ENCODE measurements at regions of chr4 and their contacts with region 1.

Region 1: DNA sequence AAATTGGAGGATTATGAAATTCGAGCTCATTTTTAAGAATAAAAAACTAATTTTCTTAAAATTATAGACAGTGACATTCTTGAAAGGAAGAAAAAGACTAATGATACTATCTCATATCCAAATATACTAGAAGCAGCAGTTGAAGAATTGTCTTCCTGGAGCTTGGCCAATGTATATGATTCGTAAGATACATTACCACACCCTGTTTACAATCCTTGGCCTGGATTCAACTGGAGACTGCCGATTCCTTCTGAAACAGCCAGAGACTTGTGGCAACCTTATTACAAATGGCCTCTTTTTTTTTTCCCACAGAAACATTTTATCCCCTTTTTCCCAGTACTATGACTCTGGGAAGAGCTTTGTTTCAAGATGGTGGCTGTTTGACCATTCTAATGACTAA is 571.2 kb upstream of the FAT1 start:
- DNase-seq: no peak
- H3K4me3 ChIP-seq: no peak overlapping the region
- H3K27ac ChIP-seq: no peak overlapping the region
- H3K4me1 ChIP-seq: no peaks in the 10 kb centered on the region
- H3K27me3 ChIP-seq: no peaks in the 10 kb centered on the region
- CTCF ChIP-seq: no peak
- POLR2A ChIP-seq: no peak

Region 2: DNA sequence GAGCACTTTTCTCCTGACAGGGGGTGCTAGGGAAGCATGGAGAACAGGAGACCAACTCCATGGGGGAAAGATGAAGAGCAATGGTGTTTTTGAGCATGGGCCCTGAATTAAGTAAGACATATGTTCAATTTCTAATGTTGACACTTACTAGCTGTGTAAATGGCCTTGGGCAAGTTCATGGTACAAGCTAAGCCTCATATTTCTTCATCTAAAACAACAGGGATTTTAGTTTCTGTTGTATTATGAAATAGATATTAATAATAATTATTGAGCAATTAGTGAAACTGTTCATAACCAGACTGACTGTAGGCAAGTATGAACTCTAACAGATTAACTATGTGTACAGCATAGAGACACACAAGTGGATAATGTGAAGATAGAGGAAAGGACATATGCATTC is 56.2 kb before region 1 on chr4:
- intact Hi-C with region 1: loop called (anchors 2 kb)
- DNase-seq: no peak
- H3K4me3 ChIP-seq: no peak overlapping the region
- H3K27ac ChIP-seq: no peak overlapping the region
- H3K4me1 ChIP-seq: no peaks in the 10 kb centered on the region
- H3K27me3 ChIP-seq: no peaks in the 10 kb centered on the region
- CTCF ChIP-seq: no peak
- POLR2A ChIP-seq: no peak

Region 3: DNA sequence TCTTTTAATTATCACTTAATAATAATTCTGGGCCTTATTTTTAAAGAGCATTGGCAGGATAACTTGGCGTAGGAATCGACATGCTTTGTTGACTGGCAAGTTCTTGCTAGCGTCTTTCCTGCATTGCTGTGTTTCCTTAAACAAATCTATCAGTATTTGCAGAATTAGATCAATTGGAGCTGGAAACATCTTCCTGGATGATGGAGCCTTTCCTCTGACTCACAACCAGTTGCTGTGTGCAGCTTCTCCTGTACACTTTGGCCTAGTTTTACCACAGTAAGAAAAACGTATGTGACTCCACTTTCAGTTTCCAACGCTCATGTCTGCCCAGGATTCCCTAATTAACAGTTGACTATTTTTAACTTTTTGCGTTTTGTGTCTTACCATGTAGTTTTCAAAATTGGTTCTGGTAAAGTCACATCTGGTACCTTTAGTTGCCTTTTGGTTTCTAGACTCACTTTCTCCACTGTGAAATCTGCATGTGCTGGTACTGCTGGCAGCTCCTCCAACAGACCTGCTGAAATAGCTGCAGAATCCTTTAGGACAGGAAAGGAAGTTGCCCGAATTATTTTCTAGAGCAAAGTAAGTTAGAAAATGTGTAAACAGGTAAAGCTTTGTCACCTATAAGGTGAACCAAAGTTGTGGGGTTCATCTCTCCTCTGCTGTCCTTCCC is 18.0 kb before region 1 on chr4:
- intact Hi-C with region 1: no loop called
- DNase-seq: no peak
- H3K4me3 ChIP-seq: no peak overlapping the region
- H3K27ac ChIP-seq: no peak overlapping the region
- H3K4me1 ChIP-seq: no peaks in the 10 kb centered on the region
- H3K27me3 ChIP-seq: no peaks in the 10 kb centered on the region
- CTCF ChIP-seq: no peak
- POLR2A ChIP-seq: no peak

Measured in breast epithelium (tissue), 4 donors.